CD8-positive, alpha-beta T cell (primary cell): ENCODE measurements at regions of chr18 and their contacts with region 1.

Region 1: DNA sequence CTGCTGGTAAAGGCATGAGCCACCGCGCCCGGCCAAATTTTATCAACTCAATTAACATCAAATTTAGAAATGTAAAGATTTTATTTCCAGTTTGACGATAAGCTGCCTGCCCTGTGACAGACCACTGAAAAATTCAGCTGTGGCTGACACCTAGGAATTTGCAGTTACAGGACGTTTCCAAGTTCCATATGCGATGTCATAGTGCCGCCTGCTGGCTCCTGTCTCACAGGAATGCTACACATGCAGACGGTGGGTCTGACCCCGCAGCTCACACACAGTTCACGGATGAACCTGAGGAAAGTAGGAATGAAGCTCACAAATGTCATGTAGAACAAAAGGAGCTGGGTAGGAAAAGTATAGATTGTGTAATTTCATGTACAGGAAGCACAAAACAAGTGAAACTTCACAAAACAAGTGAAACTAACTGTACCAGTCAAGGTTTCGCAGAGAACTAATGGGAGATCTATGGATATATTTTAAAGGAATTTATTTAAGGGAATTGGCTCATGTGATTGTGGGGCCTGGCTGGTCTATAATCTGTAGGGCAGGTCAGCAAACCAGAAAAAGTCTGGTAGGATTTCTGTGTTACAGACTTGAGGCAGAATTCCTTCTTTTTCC is 13.2 kb upstream of the SEH1L start:
- DNase-seq: peak; percentile 63 to 89 (median 80)
- ATAC-seq: peak; percentile 90
- H3K4me3 ChIP-seq: no peak overlapping the region
- H3K4me3 Mint-ChIP-seq: no peak overlapping the region
- H3K27ac ChIP-seq: no peak overlapping the region
- H3K27ac Mint-ChIP-seq: no peak overlapping the region
- H3K4me1 ChIP-seq: no peaks in the 10 kb centered on the region
- H3K4me1 Mint-ChIP-seq: peaks cover 12% of the 10 kb centered on the region
- H3K27me3 ChIP-seq: no peaks in the 10 kb centered on the region
- H3K27me3 Mint-ChIP-seq: peaks cover 4% of the 10 kb centered on the region
- CTCF ChIP-seq: peak; percentile 95

Region 2: DNA sequence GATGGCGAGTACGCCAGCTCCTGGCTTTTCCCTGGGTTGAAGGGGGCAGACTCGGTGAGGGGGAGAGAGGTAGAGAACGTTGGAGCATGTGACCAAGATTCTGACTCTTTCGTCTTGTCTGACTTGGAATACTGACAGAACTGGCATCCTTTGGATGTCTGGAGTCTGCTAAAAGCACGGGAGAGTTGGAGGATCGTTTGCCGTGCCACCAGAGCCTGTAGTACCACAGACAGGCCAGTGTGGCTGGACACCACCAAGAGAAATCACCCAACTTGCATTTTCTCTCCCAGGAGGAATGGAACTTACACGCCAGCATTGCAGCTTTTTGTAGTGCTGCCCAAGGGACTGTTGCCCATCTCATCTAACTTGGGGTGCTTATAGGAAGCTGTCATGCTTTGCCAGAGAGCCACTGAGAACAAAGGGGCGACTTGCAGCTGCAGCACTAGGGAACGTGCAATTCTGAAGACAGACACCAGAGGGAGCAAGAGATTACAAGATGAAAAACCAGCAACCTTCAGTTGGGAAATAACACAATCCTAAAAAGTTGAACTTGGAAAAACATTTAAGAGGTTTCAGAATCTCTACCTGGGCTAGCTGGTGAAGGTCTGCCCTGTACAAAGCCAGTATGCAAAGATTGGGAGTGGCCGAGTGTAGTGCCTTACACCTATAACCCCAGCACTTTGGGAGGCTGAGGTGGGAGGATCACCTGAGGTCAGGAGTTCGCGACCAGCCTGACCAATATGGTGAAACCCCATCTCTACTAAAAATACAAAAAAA is 207.6 kb before region 1 on chr18:
- CTCF ChIA-PET with region 1: interaction called, 201 read pairs
- POLR2A ChIA-PET with region 1: interaction called, 3 read pairs
- intact Hi-C with region 1: loop called (anchors 1 kb)
- DNase-seq: peak; percentile 27 to 77 (median 57)
- ATAC-seq: peak; percentile 89
- H3K4me3 ChIP-seq: no peak overlapping the region
- H3K4me3 Mint-ChIP-seq: no peak overlapping the region
- H3K27ac ChIP-seq: no peak overlapping the region
- H3K27ac Mint-ChIP-seq: peak overlapping the region; percentile 20
- H3K4me1 ChIP-seq: no peaks in the 10 kb centered on the region
- H3K4me1 Mint-ChIP-seq: no peaks in the 10 kb centered on the region
- H3K27me3 ChIP-seq: no peaks in the 10 kb centered on the region
- H3K27me3 Mint-ChIP-seq: no peaks in the 10 kb centered on the region
- CTCF ChIP-seq: peak; percentile 90

Region 3: DNA sequence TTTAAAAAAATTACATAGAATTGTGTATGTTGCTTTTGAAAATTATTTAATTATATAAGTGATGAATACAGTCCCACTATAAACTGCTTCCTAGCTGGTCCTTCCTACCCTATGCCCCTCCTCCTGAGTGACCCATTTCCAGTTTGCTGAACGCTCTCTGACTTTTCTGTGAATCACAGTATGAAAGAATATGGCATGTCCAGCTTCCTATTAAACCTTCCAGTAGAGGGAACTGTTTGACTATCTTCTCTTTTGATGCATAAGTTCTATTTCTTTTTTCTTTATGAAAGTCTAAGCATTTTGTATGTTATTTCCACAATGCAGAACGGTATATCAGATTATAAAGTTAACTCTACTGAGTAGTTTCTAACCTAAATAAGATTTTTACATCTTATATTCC is 190.5 kb before region 1 on chr18:
- CTCF ChIA-PET with region 1: interaction called, 87 read pairs
- POLR2A ChIA-PET with region 1: no interaction called
- intact Hi-C with region 1: loop called (anchors 1 kb)
- DNase-seq: peak in 2 of 9 experiments; percentile 58 to 69
- ATAC-seq: peak; percentile 63
- H3K4me3 ChIP-seq: no peak overlapping the region
- H3K4me3 Mint-ChIP-seq: no peak overlapping the region
- H3K27ac ChIP-seq: no peak overlapping the region
- H3K27ac Mint-ChIP-seq: no peak overlapping the region
- H3K4me1 ChIP-seq: no peaks in the 10 kb centered on the region
- H3K4me1 Mint-ChIP-seq: peaks cover 4% of the 10 kb centered on the region
- H3K27me3 ChIP-seq: no peaks in the 10 kb centered on the region
- H3K27me3 Mint-ChIP-seq: no peaks in the 10 kb centered on the region
- CTCF ChIP-seq: peak; percentile 51

Region 4: GRCh38 chr18:12921178-12921577 is 13.4 kb before region 1 on chr18:
- CTCF ChIA-PET with region 1: interaction called, 29 read pairs
- POLR2A ChIA-PET with region 1: interaction called, 3 read pairs
- intact Hi-C with region 1: no loop called
- DNase-seq: peak in 8 of 9 experiments; percentile 13 to 89 (median 51)
- ATAC-seq: peak; percentile 96
- H3K4me3 ChIP-seq: peak overlapping the region in 1 of 2 experiments; percentile 4
- H3K4me3 Mint-ChIP-seq: peak overlapping the region; percentile 53
- H3K27ac ChIP-seq: peak overlapping the region; percentile 25 to 37
- H3K27ac Mint-ChIP-seq: peak overlapping the region; percentile 91
- H3K4me1 ChIP-seq: peaks cover 8% of the 10 kb centered on the region
- H3K4me1 Mint-ChIP-seq: peaks cover 20% of the 10 kb centered on the region
- H3K27me3 ChIP-seq: no peaks in the 10 kb centered on the region
- H3K27me3 Mint-ChIP-seq: no peaks in the 10 kb centered on the region
- CTCF ChIP-seq: no peak

Region 5: DNA sequence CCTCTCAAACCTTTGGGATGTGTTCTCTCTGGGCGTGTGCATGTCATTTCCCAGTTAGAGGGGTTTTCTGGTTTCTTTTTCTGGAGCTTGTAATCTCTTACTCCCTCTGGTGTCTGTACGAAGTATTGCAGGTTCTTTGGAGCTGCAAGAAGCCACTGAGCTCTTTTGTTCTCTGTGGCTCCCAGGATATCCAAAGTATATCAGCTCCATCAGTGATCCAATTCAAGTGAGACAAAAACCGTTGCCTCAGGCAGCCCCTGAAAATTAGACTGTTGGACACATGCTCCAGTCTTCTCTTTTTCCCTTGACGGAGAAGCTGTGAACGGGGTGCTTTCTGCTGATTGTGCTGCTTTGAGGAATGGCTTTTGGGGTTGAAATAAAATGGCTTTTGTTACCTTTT is 225.0 kb after region 1 on chr18:
- CTCF ChIA-PET with region 1: interaction called, 13 read pairs
- POLR2A ChIA-PET with region 1: no interaction called
- intact Hi-C with region 1: loop called in 1 of 2 experiments (anchors 1 kb)
- DNase-seq: peak in 4 of 9 experiments; percentile 9 to 77 (median 57)
- ATAC-seq: peak; percentile 86
- H3K4me3 ChIP-seq: no peak overlapping the region
- H3K4me3 Mint-ChIP-seq: peak overlapping the region; percentile 20
- H3K27ac ChIP-seq: no peak overlapping the region
- H3K27ac Mint-ChIP-seq: no peak overlapping the region
- H3K4me1 ChIP-seq: no peaks in the 10 kb centered on the region
- H3K4me1 Mint-ChIP-seq: peaks cover 3% of the 10 kb centered on the region
- H3K27me3 ChIP-seq: peaks cover 0 to 2% of the 10 kb centered on the region in 2 experiments
- H3K27me3 Mint-ChIP-seq: no peaks in the 10 kb centered on the region
- CTCF ChIP-seq: peak; percentile 93